Activated B cell treated with CpG ODN at 0.5 μM for 24 hours (primary cell): ENCODE measurements at regions of chr6 and their contacts with region 1.

Region 1: GRCh38 chr6:148746363-148747144 is at the start of gene UST:
- DNase-seq: peak; percentile 55
- ATAC-seq: peak; percentile 47
- H3K4me3 Mint-ChIP-seq: peak within 1 kb of the TSS; percentile 95
- H3K27ac Mint-ChIP-seq: peak within 1 kb of the TSS; percentile 94
- H3K4me1 Mint-ChIP-seq: peaks cover 42% of the 10 kb centered on the region
- H3K27me3 Mint-ChIP-seq: no peaks in the 10 kb centered on the region
- CTCF ChIP-seq: no peak
- total RNA-seq, gene UST: 14.3 and 18.1 TPM in 2 replicates

Region 2: DNA sequence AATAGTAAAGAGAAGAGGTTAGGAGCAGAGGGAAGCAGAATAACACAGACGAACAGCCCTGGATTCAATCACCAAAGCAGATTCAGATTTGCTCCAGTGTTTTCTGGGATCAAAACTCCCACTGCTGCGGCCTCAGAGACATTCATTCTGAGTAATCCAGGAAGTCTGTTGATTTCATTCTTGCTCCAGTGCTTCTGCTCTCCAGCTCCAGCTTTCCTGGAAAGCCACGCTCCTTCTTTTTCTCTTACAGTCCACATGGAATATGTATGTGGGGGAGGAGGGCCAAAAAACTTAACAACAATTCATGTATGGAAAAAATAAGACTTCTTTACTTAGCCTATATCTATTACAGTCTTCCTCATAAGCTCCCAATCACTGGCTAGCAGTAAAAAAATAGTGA is 26.1 kb before region 1 on chr6:
- CTCF ChIA-PET with region 1: no interaction called
- POLR2A ChIA-PET with region 1: no interaction called
- intact Hi-C with region 1: no loop called
- DNase-seq: no peak
- ATAC-seq: no peak
- H3K4me3 Mint-ChIP-seq: no peak overlapping the region
- H3K27ac Mint-ChIP-seq: no peak overlapping the region
- H3K4me1 Mint-ChIP-seq: no peaks in the 10 kb centered on the region
- H3K27me3 Mint-ChIP-seq: peaks cover 3% of the 10 kb centered on the region
- CTCF ChIP-seq: no peak

Region 3: DNA sequence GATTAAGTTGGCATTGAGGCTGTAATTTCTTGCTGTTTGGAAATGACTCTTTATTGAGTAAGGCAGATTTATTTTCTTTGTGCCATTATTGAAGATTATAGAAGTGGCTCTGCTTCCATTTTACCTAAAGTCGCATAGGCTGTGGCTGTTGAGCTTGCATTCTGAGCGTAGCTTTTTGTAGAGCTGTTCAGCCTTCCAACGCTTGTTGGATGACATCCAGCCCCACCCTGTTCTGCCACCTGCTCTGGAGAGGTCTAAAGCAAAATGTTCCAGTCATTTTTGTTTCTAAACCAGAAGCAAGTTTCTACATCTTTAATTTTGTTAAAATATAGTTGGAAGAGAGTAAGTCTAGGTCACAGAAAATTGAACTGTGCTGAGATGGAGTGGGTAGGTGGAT is 24.6 kb after region 1 on chr6:
- CTCF ChIA-PET with region 1: interaction called, 8 read pairs
- POLR2A ChIA-PET with region 1: interaction called, 15 read pairs
- intact Hi-C with region 1: no loop called
- DNase-seq: no peak
- ATAC-seq: no peak
- H3K4me3 Mint-ChIP-seq: peak overlapping the region; percentile 44
- H3K27ac Mint-ChIP-seq: peak overlapping the region; percentile 24
- H3K4me1 Mint-ChIP-seq: peaks cover 75% of the 10 kb centered on the region
- H3K27me3 Mint-ChIP-seq: no peaks in the 10 kb centered on the region
- CTCF ChIP-seq: no peak

Region 4: DNA sequence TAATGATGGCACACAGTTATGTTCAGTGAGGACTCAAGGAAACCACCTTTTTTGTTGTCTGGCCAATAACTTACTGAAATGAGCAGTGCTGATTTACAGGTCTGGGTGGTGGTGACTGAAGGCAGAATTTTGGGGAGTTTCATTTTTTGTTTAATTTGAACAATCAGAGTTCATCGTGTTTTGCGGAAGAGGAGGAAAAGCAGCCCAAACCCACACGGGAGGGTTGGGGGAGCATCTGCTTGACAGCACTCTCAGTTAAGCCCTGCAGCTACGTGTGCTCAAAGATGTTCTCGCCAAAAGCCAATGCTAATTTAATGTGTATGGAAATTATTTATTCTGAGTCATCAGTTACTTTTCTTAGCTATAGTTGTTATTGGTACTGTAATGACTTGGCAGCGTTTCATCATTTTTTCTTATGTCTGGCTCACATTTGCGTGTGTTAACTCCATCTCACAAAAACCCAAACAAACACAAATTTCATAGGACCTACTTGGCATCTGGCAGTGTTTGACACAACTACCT is 89.4 kb after region 1 on chr6:
- CTCF ChIA-PET with region 1: interaction called, 4 read pairs
- POLR2A ChIA-PET with region 1: no interaction called
- intact Hi-C with region 1: loop called (anchors 1 kb)
- DNase-seq: no peak
- ATAC-seq: peak; percentile 69
- H3K4me3 Mint-ChIP-seq: peak overlapping the region; percentile 74
- H3K27ac Mint-ChIP-seq: peak overlapping the region; percentile 84
- H3K4me1 Mint-ChIP-seq: peaks cover 41% of the 10 kb centered on the region
- H3K27me3 Mint-ChIP-seq: no peaks in the 10 kb centered on the region
- CTCF ChIP-seq: no peak

Region 5: GRCh38 chr6:148874698-148875293 is 128.2 kb after region 1 on chr6:
- CTCF ChIA-PET with region 1: no interaction called
- POLR2A ChIA-PET with region 1: no interaction called
- intact Hi-C with region 1: no loop called
- DNase-seq: no peak
- ATAC-seq: no peak
- H3K4me3 Mint-ChIP-seq: no peak overlapping the region
- H3K27ac Mint-ChIP-seq: no peak overlapping the region
- H3K4me1 Mint-ChIP-seq: peaks cover 49% of the 10 kb centered on the region
- H3K27me3 Mint-ChIP-seq: no peaks in the 10 kb centered on the region
- CTCF ChIP-seq: no peak

Region 6: GRCh38 chr6:148885136-148885870 is 138.7 kb after region 1 on chr6:
- CTCF ChIA-PET with region 1: no interaction called
- POLR2A ChIA-PET with region 1: no interaction called
- intact Hi-C with region 1: loop called (anchors 5 kb)
- DNase-seq: no peak
- ATAC-seq: no peak
- H3K4me3 Mint-ChIP-seq: no peak overlapping the region
- H3K27ac Mint-ChIP-seq: no peak overlapping the region
- H3K4me1 Mint-ChIP-seq: peaks cover 22% of the 10 kb centered on the region
- H3K27me3 Mint-ChIP-seq: no peaks in the 10 kb centered on the region
- CTCF ChIP-seq: no peak